ENCODE measurements at regions of chr1 and their contacts with region 1.

Region 1: DNA sequence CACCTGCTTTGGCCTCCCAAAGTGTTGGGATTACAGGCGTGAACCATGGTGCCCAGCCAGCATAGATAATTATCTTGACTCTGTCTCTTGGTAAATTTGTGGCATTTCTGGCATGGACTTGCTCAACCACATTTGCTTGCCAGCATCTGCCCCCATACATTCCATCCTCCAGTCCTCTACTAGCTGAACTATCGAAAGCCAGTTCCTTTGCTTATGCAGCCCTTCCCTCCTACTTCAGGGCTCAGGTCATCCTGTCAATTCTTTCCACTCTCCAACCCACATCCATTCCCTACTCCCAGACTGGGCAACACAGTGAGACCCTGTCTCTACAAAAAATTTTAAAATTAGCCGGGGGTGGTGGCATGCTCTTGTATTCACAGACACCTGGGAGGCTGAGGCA is 13.0 kb upstream of the UQCRHL start:
- DNase-seq: no peak
- ATAC-seq: no peak
- H3K4me3 ChIP-seq: no peak overlapping the region
- H3K4me3 Mint-ChIP-seq: no peak overlapping the region
- H3K27ac ChIP-seq: no peak overlapping the region
- H3K27ac Mint-ChIP-seq: no peak overlapping the region
- H3K4me1 ChIP-seq: peaks cover 4 to 10% of the 10 kb centered on the region in 2 donors
- H3K4me1 Mint-ChIP-seq: peaks cover 9% of the 10 kb centered on the region
- H3K27me3 ChIP-seq: no peaks in the 10 kb centered on the region
- H3K27me3 Mint-ChIP-seq: no peaks in the 10 kb centered on the region
- CTCF ChIP-seq: no peak

Region 2: GRCh38 chr1:15627343-15627988 is 193.0 kb before region 1 on chr1:
- CTCF ChIA-PET with region 1: no interaction called
- POLR2A ChIA-PET with region 1: no interaction called
- intact Hi-C with region 1: no loop called
- DNase-seq: no peak
- ATAC-seq: peak; percentile 41
- H3K4me3 ChIP-seq: no peak overlapping the region
- H3K4me3 Mint-ChIP-seq: no peak overlapping the region
- H3K27ac ChIP-seq: peak overlapping the region in 1 of 2 donors; percentile 33
- H3K27ac Mint-ChIP-seq: peak overlapping the region; percentile 39
- H3K4me1 ChIP-seq: peaks cover 4 to 16% of the 10 kb centered on the region in 2 donors
- H3K4me1 Mint-ChIP-seq: peaks cover 41% of the 10 kb centered on the region
- H3K27me3 ChIP-seq: no peaks in the 10 kb centered on the region
- H3K27me3 Mint-ChIP-seq: no peaks in the 10 kb centered on the region
- CTCF ChIP-seq: no peak

Region 3: DNA sequence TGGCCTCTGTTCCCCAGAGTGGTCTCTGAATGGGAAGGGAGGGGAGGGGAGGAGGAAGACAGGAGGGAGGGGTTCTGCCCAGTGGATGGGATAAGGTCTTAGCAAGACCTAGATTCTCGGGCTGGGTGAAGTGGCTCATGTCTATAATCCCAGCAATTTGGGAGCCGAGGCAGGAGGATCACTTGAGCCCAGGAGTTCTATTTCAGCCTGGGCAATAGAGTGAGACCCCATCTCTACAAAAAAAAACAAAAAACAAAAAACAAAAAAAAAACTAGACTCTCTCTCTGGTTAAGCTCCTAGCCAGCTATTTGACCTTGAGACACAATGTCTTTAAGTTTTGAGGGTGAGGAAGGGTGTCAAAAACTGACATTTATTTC is 24.4 kb before region 1 on chr1:
- CTCF ChIA-PET with region 1: interaction called, 11 read pairs
- POLR2A ChIA-PET with region 1: no interaction called
- intact Hi-C with region 1: no loop called
- DNase-seq: no peak
- ATAC-seq: no peak
- H3K4me3 ChIP-seq: no peak overlapping the region
- H3K4me3 Mint-ChIP-seq: no peak overlapping the region
- H3K27ac ChIP-seq: no peak overlapping the region
- H3K27ac Mint-ChIP-seq: no peak overlapping the region
- H3K4me1 ChIP-seq: peaks cover 3 to 5% of the 10 kb centered on the region in 2 donors
- H3K4me1 Mint-ChIP-seq: peaks cover 2% of the 10 kb centered on the region
- H3K27me3 ChIP-seq: peaks cover 0 to 2% (median 0%) of the 10 kb centered on the region in 4 experiments
- H3K27me3 Mint-ChIP-seq: peaks cover 3% of the 10 kb centered on the region
- CTCF ChIP-seq: no peak

Region 4: GRCh38 chr1:15835741-15836510 is 15.4 kb after region 1 on chr1:
- CTCF ChIA-PET with region 1: interaction called, 55 read pairs
- POLR2A ChIA-PET with region 1: interaction called, 9 read pairs
- intact Hi-C with region 1: loop called (anchors 2 kb)
- DNase-seq: peak; percentile 99
- ATAC-seq: peak; percentile 42
- H3K4me3 ChIP-seq: peak overlapping the region; percentile 82 to 100 (median 97)
- H3K4me3 Mint-ChIP-seq: peak overlapping the region; percentile 97
- H3K27ac ChIP-seq: peak overlapping the region; percentile 98 to 100
- H3K27ac Mint-ChIP-seq: peak overlapping the region; percentile 95
- H3K4me1 ChIP-seq: peaks cover 33 to 43% of the 10 kb centered on the region in 2 donors
- H3K4me1 Mint-ChIP-seq: peaks cover 35% of the 10 kb centered on the region
- H3K27me3 ChIP-seq: no peaks in the 10 kb centered on the region
- H3K27me3 Mint-ChIP-seq: no peaks in the 10 kb centered on the region
- CTCF ChIP-seq: no peak

Region 5: DNA sequence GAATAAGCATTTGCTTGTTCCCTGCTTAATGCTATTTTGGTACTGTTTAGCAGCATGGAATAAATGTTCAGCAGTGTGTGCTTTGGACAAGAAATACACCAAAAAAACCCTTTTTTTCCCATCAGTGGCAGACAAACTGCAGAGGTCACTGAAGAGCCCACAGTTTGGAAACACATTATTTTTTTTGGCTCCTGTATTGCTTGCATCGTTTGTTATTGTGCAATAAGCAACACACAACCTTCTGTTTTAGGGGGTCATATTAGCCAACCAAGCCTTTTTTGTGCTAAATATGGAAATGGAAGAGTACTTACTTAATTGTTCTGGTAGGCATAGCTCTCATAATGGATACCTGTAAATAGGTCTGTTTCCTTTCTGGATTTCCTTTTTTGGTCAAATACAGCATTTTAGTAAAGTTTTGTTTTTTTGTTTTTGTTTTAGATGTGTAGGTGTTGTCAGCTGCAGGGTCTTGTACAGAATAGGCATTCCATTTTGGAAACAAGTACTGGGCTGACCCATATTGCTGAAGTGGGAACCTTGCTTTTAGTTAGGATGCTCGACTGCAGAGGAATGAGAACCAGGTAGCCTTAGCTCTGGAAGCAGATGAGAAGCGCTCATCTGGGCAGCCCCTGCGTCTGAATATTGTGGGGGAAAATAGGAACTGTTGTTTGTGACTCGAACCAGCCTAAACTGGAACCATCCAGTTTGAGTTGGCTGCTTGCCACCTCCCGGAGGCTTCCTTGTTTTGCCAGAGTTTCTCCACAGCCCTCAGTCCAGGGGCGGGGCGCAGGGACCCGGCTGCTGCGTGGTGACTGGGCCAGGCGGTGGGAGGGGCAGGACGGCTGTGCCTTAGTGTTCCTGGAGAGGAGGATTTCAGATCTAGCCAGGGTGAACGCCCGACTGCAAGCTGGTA is 65.5 kb after region 1 on chr1:
- CTCF ChIA-PET with region 1: interaction called, 9 read pairs
- POLR2A ChIA-PET with region 1: no interaction called
- intact Hi-C with region 1: loop called (anchors 1 kb)
- DNase-seq: peak; percentile 75
- ATAC-seq: peak; percentile 59
- H3K4me3 ChIP-seq: peak overlapping the region; percentile 28 to 72 (median 47)
- H3K4me3 Mint-ChIP-seq: peak overlapping the region; percentile 82
- H3K27ac ChIP-seq: peak overlapping the region; percentile 74 to 84
- H3K27ac Mint-ChIP-seq: peak overlapping the region; percentile 90
- H3K4me1 ChIP-seq: peaks cover 51 to 56% of the 10 kb centered on the region in 2 donors
- H3K4me1 Mint-ChIP-seq: peaks cover 62% of the 10 kb centered on the region
- H3K27me3 ChIP-seq: no peaks in the 10 kb centered on the region
- H3K27me3 Mint-ChIP-seq: no peaks in the 10 kb centered on the region
- CTCF ChIP-seq: no peak

Region 6: GRCh38 chr1:15911141-15911540 is 90.7 kb after region 1 on chr1:
- CTCF ChIA-PET with region 1: interaction called, 34 read pairs
- POLR2A ChIA-PET with region 1: interaction called, 6 read pairs
- intact Hi-C with region 1: loop called (anchors 5 kb)
- DNase-seq: no peak
- ATAC-seq: no peak
- H3K4me3 ChIP-seq: no peak overlapping the region
- H3K4me3 Mint-ChIP-seq: no peak overlapping the region
- H3K27ac ChIP-seq: no peak overlapping the region
- H3K27ac Mint-ChIP-seq: no peak overlapping the region
- H3K4me1 ChIP-seq: peaks cover 6 to 7% of the 10 kb centered on the region in 2 donors
- H3K4me1 Mint-ChIP-seq: peaks cover 9% of the 10 kb centered on the region
- H3K27me3 ChIP-seq: no peaks in the 10 kb centered on the region
- H3K27me3 Mint-ChIP-seq: no peaks in the 10 kb centered on the region
- CTCF ChIP-seq: no peak

Region 7: GRCh38 chr1:15957228-15958095 is 137.0 kb after region 1 on chr1:
- CTCF ChIA-PET with region 1: interaction called, 19 read pairs
- POLR2A ChIA-PET with region 1: no interaction called
- intact Hi-C with region 1: no loop called
- DNase-seq: peak; percentile 11
- ATAC-seq: no peak
- H3K4me3 ChIP-seq: no peak overlapping the region
- H3K4me3 Mint-ChIP-seq: no peak overlapping the region
- H3K27ac ChIP-seq: no peak overlapping the region
- H3K27ac Mint-ChIP-seq: peak overlapping the region; percentile 20
- H3K4me1 ChIP-seq: peaks cover 15 to 17% of the 10 kb centered on the region in 2 donors
- H3K4me1 Mint-ChIP-seq: peaks cover 62% of the 10 kb centered on the region
- H3K27me3 ChIP-seq: no peaks in the 10 kb centered on the region
- H3K27me3 Mint-ChIP-seq: no peaks in the 10 kb centered on the region
- CTCF ChIP-seq: no peak

Region 8: GRCh38 chr1:15994590-15995351 is 174.3 kb after region 1 on chr1:
- CTCF ChIA-PET with region 1: interaction called, 13 read pairs
- POLR2A ChIA-PET with region 1: no interaction called
- intact Hi-C with region 1: loop called (anchors 1 kb)
- DNase-seq: peak; percentile 53
- ATAC-seq: peak; percentile 69
- H3K4me3 ChIP-seq: no peak overlapping the region
- H3K4me3 Mint-ChIP-seq: no peak overlapping the region
- H3K27ac ChIP-seq: no peak overlapping the region
- H3K27ac Mint-ChIP-seq: no peak overlapping the region
- H3K4me1 ChIP-seq: no peaks in the 10 kb centered on the region
- H3K4me1 Mint-ChIP-seq: no peaks in the 10 kb centered on the region
- H3K27me3 ChIP-seq: peaks cover 0 to 7% (median under 1%) of the 10 kb centered on the region in 4 experiments
- H3K27me3 Mint-ChIP-seq: no peaks in the 10 kb centered on the region
- CTCF ChIP-seq: peak; percentile 62